Heart right ventricle (tissue), 16 donors: ENCODE measurements at regions of chr10 and their contacts with region 1.

Region 1: GRCh38 chr10:22752272-22752889 is 38.0 kb upstream of the PIP4K2A start:
- DNase-seq: no peak
- ATAC-seq: no peak
- H3K4me3 ChIP-seq: no peak overlapping the region
- H3K27ac ChIP-seq: no peak overlapping the region
- H3K4me1 ChIP-seq: peaks cover 0 to 10% (median 0%) of the 10 kb centered on the region in 9 donors
- H3K27me3 ChIP-seq: no peaks in the 10 kb centered on the region
- CTCF ChIP-seq: no peak

Region 2: GRCh38 chr10:22791655-22792054 is 39.3 kb after region 1 on chr10:
- intact Hi-C with region 1: no loop called
- DNase-seq: no peak
- ATAC-seq: no peak
- H3K4me3 ChIP-seq: no peak overlapping the region
- H3K27ac ChIP-seq: no peak overlapping the region
- H3K4me1 ChIP-seq: no peaks in the 10 kb centered on the region
- H3K27me3 ChIP-seq: peaks cover 0 to 9% (median 0%) of the 10 kb centered on the region in 7 donors
- CTCF ChIP-seq: no peak

Region 3: DNA sequence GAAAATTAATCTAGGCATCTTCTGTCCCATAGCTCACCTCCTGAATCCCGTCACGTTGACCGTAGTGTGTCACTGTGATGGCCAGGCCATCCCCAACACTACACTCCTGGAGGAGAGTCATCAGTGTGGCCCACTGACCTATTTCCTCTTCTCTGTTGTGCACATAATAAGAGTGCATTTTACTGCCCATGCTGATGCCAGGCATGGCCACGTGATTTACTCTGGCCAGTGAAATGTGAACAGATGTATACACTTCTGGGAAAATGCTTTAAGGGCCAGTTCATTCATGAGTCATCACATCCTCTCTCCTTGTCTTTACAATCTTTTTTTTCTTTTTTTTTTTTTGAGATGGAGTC is 63.9 kb after region 1 on chr10:
- intact Hi-C with region 1: no loop called
- DNase-seq: no peak
- ATAC-seq: peak in 1 of 8 donors; percentile 42
- H3K4me3 ChIP-seq: no peak overlapping the region
- H3K27ac ChIP-seq: no peak overlapping the region
- H3K4me1 ChIP-seq: peaks cover 0 to 15% (median 0%) of the 10 kb centered on the region in 9 donors
- H3K27me3 ChIP-seq: no peaks in the 10 kb centered on the region
- CTCF ChIP-seq: no peak

Region 4: DNA sequence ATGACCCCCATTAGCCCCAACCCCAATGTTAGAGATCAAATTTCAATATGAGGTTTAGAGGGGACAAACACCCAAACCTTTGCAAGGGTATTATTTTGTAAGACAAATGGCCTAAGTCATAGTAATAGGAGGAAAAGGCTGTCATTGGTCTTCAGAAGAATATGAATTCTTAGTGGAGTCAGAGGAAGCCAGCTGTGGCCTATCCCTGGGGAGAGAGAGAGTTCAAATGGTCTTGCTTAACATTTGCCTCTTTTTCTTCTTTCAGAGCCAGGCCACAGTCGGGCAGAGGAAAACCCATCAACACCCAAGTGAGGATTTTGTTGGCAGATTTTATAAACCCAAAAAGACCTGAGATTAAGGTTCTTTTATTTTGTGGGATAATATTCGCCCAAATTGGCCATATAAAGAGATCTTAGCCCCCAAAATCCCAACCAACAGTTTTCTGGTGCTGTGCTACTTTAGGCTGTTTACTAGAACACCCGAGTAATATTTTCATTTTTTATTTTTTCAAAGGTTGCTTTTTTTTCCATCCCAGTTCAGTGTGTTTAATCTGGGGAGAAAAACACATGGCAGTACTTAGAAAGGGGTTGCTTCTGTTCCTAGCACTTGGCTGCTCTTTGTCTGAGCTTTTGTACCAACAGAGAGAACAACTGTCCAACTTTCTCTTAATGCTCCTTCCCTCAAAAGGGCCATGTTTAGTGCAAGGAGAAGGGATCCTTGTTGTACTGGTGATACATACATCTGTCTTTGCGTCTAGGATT is 148.6 kb after region 1 on chr10:
- intact Hi-C with region 1: loop called in 1 of 10 experiments (anchors 10 kb)
- DNase-seq: peak in 1 of 2 donors; percentile 30
- ATAC-seq: peak in 6 of 8 donors; percentile 57 to 81 (median 76)
- H3K4me3 ChIP-seq: no peak overlapping the region
- H3K27ac ChIP-seq: peak overlapping the region in 2 of 10 donors; percentile 45 to 51
- H3K4me1 ChIP-seq: peaks cover 0 to 6% (median 0%) of the 10 kb centered on the region in 9 donors
- H3K27me3 ChIP-seq: no peaks in the 10 kb centered on the region
- CTCF ChIP-seq: no peak

Region 5: DNA sequence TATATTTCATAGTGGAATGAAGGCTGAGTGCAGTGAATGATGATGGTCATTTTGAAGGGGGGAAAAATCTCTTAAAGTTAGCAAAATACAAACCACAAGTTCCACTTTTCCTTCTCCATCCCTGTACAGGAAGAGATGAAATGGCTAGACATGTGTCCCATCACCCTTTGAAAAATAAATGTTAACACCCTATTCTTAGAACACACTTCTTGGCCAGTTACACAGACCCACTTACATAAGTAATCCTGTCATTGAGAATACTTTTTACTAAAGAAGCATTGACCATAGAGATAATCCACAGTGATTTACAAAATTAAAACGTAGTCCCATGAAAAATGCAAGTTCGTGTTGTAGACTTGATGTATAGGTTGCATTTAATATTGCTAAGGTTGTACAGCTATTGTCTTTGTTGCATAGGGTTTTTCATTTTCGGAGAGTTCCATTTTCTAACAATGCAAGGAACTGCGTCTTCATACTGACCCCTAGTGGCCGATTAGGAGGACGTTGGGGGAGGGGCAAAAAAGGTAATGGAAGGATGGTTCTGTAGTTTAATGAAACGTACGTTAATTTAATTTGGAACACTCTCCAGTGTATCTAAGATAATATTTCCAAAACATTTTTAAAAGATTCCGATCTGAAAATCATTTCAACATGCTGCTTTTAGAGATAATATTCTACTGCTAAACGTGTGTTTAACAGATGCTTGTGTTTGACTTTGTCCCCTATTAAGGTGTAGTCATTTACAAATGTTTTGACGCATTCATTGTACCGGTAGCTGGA is 236.4 kb after region 1 on chr10:
- intact Hi-C with region 1: no loop called
- DNase-seq: peak in 1 of 2 donors; percentile 71
- ATAC-seq: peak; percentile 58 to 88 (median 78)
- H3K4me3 ChIP-seq: peak overlapping the region in 2 of 10 donors; percentile 23 to 32
- H3K27ac ChIP-seq: no peak overlapping the region
- H3K4me1 ChIP-seq: peaks cover 0 to 13% (median 2%) of the 10 kb centered on the region in 9 donors
- H3K27me3 ChIP-seq: peaks cover 0 to 3% (median 0%) of the 10 kb centered on the region in 7 donors
- CTCF ChIP-seq: peak; percentile 80 to 96 (median 91)